Activated CD4-positive, alpha-beta memory T cell treated with anti-CD3 and anti-CD28 coated beads for 36 hours (primary cell): ENCODE measurements at regions of chr4 and their contacts with region 1.

Region 1: DNA sequence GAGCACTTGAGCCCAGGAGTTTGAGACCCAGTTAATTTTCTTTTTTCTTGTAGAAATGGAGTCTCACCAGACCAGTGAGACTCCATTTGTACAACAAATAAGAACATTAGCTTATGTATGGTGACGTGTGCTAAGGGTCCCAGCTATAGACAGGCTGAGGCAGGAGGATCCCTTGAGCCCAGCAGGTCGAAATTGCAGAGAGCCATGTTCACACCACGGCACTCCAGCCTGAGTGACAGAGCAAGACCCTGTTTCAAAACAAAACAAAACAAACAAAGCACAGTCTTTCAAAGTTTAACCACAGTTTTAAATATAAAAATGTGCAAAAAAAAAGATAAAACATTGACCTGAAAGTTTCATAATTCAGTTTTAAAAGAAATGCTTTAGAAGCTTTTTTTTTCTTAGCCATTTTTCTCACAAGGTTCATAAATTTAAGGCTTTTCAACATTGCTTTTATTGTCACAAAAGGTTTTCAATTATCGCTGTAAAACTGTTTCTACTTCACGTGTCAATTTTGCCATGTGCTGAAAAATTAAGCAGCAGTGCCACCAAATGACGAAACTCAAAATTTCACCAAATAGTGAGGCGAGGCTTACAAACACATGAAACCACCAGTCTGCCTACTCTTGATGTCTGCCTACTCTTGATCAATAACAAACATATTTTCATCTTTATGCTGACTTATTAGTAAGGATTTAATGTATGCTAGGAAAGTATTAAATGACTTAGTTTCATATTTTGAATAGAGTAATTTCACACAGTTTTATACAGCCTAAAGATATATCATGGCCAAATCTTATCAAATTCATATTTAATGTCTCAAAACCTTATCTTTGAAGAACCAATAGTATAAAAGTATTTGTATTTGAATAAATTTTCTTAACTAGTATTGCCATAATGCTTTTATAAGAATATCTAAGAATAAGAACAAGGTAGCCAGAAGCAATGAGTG is 126.3 kb downstream of the NEK1 start:
- DNase-seq: peak; percentile 43
- H3K4me3 Mint-ChIP-seq: no peak overlapping the region
- H3K27ac Mint-ChIP-seq: no peak overlapping the region
- H3K4me1 Mint-ChIP-seq: peaks cover 2% of the 10 kb centered on the region
- H3K27me3 Mint-ChIP-seq: no peaks in the 10 kb centered on the region

Region 2: GRCh38 chr4:169566021-169566818 is 80.2 kb after region 1 on chr4:
- CTCF ChIA-PET with region 1: no interaction called
- POLR2A ChIA-PET with region 1: no interaction called
- intact Hi-C with region 1: loop called (anchors 10 kb)
- DNase-seq: no peak
- H3K4me3 Mint-ChIP-seq: no peak overlapping the region
- H3K27ac Mint-ChIP-seq: no peak overlapping the region
- H3K4me1 Mint-ChIP-seq: peaks cover 5% of the 10 kb centered on the region
- H3K27me3 Mint-ChIP-seq: no peaks in the 10 kb centered on the region